Ascending aorta (tissue), 2 donors: ENCODE measurements at regions of chr9 and their contacts with region 1.

Region 1: GRCh38 chr9:112379177-112380101 is 469 bp upstream of the HSDL2 start:
- DNase-seq: peak; percentile 97 to 100
- H3K4me3 ChIP-seq: peak overlapping the region; percentile 89 to 94
- H3K27ac ChIP-seq: peak overlapping the region; percentile 92 to 98
- H3K4me1 ChIP-seq: peaks cover 0 to 30% of the 10 kb centered on the region in 2 donors
- H3K27me3 ChIP-seq: no peaks in the 10 kb centered on the region
- CTCF ChIP-seq: no peak

Region 2: GRCh38 chr9:111975709-111976108 is 403.7 kb before region 1 on chr9:
- intact Hi-C with region 1: no loop called
- DNase-seq: peak in 1 of 2 donors; percentile 57
- H3K4me3 ChIP-seq: no peak overlapping the region
- H3K27ac ChIP-seq: no peak overlapping the region
- H3K4me1 ChIP-seq: no peaks in the 10 kb centered on the region
- H3K27me3 ChIP-seq: no peaks in the 10 kb centered on the region
- CTCF ChIP-seq: no peak

Region 3: GRCh38 chr9:112447283-112447761 is 67.9 kb after region 1 on chr9:
- intact Hi-C with region 1: loop called (anchors 2 kb)
- DNase-seq: peak in 1 of 2 donors; percentile 70
- H3K4me3 ChIP-seq: no peak overlapping the region
- H3K27ac ChIP-seq: peak overlapping the region; percentile 70 to 79
- H3K4me1 ChIP-seq: peaks cover 0 to 13% of the 10 kb centered on the region in 2 donors
- H3K27me3 ChIP-seq: no peaks in the 10 kb centered on the region
- CTCF ChIP-seq: no peak

Region 4: GRCh38 chr9:112462855-112463254 is 83.4 kb after region 1 on chr9:
- intact Hi-C with region 1: no loop called
- DNase-seq: no peak
- H3K4me3 ChIP-seq: no peak overlapping the region
- H3K27ac ChIP-seq: no peak overlapping the region
- H3K4me1 ChIP-seq: no peaks in the 10 kb centered on the region
- H3K27me3 ChIP-seq: no peaks in the 10 kb centered on the region
- CTCF ChIP-seq: no peak

Region 5: DNA sequence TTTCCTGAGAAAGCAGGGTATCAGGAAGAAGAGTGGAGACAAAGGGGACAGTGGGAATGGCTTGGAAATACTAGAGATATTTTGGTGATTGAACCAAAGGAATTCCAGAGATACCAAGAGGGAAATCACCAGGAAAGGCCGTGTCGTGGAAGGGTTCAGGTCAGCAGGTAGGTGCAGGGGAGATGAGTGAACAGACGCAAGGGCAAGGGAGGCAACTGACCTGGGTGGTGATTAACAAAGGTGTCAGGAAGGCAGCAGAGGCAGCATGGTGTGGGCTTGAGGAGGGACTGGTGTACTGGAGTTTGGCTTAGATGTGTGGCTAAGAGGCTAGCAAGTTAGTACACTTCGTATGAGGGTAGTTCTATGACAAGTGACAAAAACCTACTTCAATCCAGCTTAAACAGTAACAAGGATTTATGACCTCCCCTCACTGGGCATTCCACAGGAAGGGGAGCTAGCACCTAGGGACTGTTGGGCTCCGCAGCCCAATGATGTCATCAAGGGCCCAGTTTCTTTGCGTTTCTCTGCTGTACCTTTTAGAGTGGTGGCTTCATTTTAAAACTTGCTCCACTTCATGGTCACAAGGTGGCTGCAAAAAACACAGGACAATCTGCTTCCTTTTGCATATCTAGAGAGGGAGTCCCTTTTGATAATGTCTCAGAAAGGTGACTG is 301.4 kb after region 1 on chr9:
- intact Hi-C with region 1: no loop called
- DNase-seq: no peak
- H3K4me3 ChIP-seq: no peak overlapping the region
- H3K27ac ChIP-seq: no peak overlapping the region
- H3K4me1 ChIP-seq: no peaks in the 10 kb centered on the region
- H3K27me3 ChIP-seq: no peaks in the 10 kb centered on the region
- CTCF ChIP-seq: no peak